K562 (cell line): ENCODE measurements at regions of chr12 and their contacts with region 1.

Region 1: GRCh38 chr12:32947206-32948067 is 50.9 kb upstream of the PKP2 start:
- DNase-seq: peak in 2 of 4 experiments; percentile 8 to 40
- ATAC-seq: peak; percentile 75
- H3K4me3 ChIP-seq: no peak overlapping the region
- H3K27ac ChIP-seq: peak overlapping the region; percentile 55; the same call in 1 of the 3 replicates
- H3K4me1 ChIP-seq: no peaks in the 10 kb centered on the region; a peak in 1 of 5 replicates
- H3K27me3 ChIP-seq: no peaks in the 10 kb centered on the region
- CTCF ChIP-seq: peak in 2 of 3 experiments; percentile 23 to 50; a peak in 3 of 6 replicates
- EP300 ChIP-seq: no peak
- POLR2A ChIP-seq: no peak
- RAD21 ChIP-seq: peak; percentile 69 to 81

Region 2: DNA sequence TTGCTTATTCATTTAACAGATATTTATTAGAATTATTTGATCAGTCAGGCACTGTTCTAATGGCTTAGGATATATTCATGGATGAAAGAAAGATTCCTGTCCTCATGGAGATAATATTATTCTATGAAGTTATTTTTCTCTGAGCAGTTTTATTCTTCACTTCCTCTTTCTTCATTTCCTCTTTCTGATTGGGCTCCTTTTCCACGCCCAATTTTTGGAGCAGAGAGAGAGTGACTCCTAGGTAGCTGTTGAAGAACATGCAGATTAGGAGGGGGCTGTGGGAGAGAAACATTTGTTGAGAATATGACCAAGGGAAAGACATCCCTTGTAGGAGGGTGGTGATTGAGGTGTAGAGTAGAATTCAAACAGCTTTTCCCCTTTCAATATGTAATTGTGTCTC is 185.7 kb before region 1 on chr12:
- CTCF ChIA-PET with region 1: no interaction called
- POLR2A ChIA-PET with region 1: no interaction called
- in situ Hi-C with region 1: loop called (anchors 5 kb)
- intact Hi-C with region 1: no loop called
- DNase-seq: peak in 1 of 4 experiments; percentile 30
- ATAC-seq: peak; percentile 68; the same call in 2 of the 3 replicates
- H3K4me3 ChIP-seq: no peak overlapping the region
- H3K27ac ChIP-seq: no peak overlapping the region
- H3K4me1 ChIP-seq: no peaks in the 10 kb centered on the region
- H3K27me3 ChIP-seq: no peaks in the 10 kb centered on the region
- CTCF ChIP-seq: no peak
- EP300 ChIP-seq: no peak
- POLR2A ChIP-seq: no peak
- RAD21 ChIP-seq: no peak

Region 3: GRCh38 chr12:34363050-34363673 is 1415.7 kb after region 1 on chr12:
- CTCF ChIA-PET with region 1: no interaction called
- POLR2A ChIA-PET with region 1: no interaction called
- in situ Hi-C with region 1: no loop called
- intact Hi-C with region 1: no loop called
- DNase-seq: peak; percentile 54 to 87 (median 72)
- ATAC-seq: peak; percentile 57
- H3K4me3 ChIP-seq: no peak overlapping the region
- H3K27ac ChIP-seq: no peak overlapping the region; the same call in 2 of the 3 replicates
- H3K4me1 ChIP-seq: peaks cover 0 to 62% of the 10 kb centered on the region in 2 experiments; a peak in 2 of 5 replicates
- H3K27me3 ChIP-seq: peaks cover 0 to 60% of the 10 kb centered on the region in 2 experiments; a peak in 3 of 5 replicates
- CTCF ChIP-seq: no peak
- EP300 ChIP-seq: no peak
- POLR2A ChIP-seq: no peak
- RAD21 ChIP-seq: no peak